Panc1 (cell line): ENCODE measurements at regions of chr5 and their contacts with region 1.

Region 1: DNA sequence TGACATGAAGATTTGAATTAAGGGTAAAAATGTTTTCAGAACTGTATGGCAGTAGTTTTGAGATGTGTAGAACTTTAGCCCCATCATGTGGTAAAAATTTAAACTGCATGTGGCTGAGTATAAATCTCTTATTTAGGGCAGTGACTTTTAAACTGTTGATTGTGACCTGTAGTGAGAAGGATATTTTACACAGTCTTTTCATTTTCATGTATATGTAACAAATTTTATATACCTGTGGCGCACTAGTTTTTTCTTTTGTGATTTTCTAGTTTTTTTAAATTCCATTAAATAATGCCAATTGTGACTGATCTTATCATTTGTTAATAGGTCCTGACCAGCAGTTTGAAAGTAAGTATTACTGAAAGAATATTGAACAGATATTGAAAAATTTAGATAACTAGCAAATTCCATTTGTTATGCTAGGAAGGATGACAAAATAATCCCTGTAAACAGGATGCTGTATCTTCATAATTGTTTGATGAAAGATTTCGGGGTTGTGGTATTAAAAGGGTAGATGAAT is 47.2 kb downstream of the GPBP1 start:
- DNase-seq: peak; percentile 62
- ATAC-seq: peak; percentile 78
- H3K4me3 ChIP-seq: no peak overlapping the region
- H3K27ac ChIP-seq: no peak overlapping the region
- H3K4me1 ChIP-seq: 0 out of 2 replicates have a peak, but pooled peaks cover under 1% of the 10 kb centered on the region
- H3K27me3 ChIP-seq: no peaks in the 10 kb centered on the region
- CTCF ChIP-seq: peak; percentile 82; the same call in 1 of the 2 replicates

Region 2: GRCh38 chr5:57175551-57176309 is 45.4 kb before region 1 on chr5:
- CTCF ChIA-PET with region 1: interaction called, 4 read pairs
- POLR2A ChIA-PET with region 1: interaction called, 11 read pairs
- in situ Hi-C with region 1: no loop called
- intact Hi-C with region 1: loop called (anchors 2 kb)
- DNase-seq: no peak
- ATAC-seq: no peak
- H3K4me3 ChIP-seq: peak overlapping the region; percentile 98
- H3K27ac ChIP-seq: peak overlapping the region; percentile 94
- H3K4me1 ChIP-seq: peaks cover 15% of the 10 kb centered on the region; the same call in 1 of the 2 replicates
- H3K27me3 ChIP-seq: no peaks in the 10 kb centered on the region
- CTCF ChIP-seq: no peak

Region 3: DNA sequence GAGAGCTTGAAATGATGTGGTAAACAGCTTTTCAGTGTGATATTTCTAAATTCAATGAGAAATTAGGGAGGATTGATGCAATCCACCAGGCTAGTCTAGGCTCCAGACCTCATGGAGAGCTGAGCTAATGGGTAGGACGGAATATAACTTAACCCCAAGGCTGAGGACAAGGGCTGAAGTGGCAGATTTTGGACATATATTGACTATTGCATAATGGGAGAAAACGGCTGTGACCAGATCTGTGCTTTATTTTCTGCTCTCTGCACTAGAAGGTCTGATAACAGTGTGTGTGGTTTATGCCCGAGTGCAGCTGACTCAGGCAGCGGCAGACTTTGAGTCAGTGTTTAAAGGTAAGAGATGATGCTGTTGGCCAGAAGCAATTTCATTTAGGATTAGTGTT is 190.9 kb after region 1 on chr5:
- CTCF ChIA-PET with region 1: no interaction called
- POLR2A ChIA-PET with region 1: no interaction called
- in situ Hi-C with region 1: no loop called
- intact Hi-C with region 1: no loop called
- DNase-seq: no peak
- ATAC-seq: no peak
- H3K4me3 ChIP-seq: no peak overlapping the region
- H3K27ac ChIP-seq: peak overlapping the region; percentile 50; the same call in 1 of the 2 replicates
- H3K4me1 ChIP-seq: peaks cover 3% of the 10 kb centered on the region
- H3K27me3 ChIP-seq: no peaks in the 10 kb centered on the region
- CTCF ChIP-seq: no peak